Activated CD8-positive, alpha-beta T cell treated with anti-CD3 and anti-CD28 coated beads, Interleukin-2, amount 10 ng/mL, durations not matched to agents 7 days and 5 days (primary cell): ENCODE measurements at regions of chr1 and their contacts with region 1.

Region 1: GRCh38 chr1:205255941-205256780 is 28.4 kb downstream of the TMCC2 start:
- DNase-seq: peak; percentile 88
- ATAC-seq: peak; percentile 94
- H3K4me3 Mint-ChIP-seq: no peak overlapping the region
- H3K27ac Mint-ChIP-seq: no peak overlapping the region
- H3K4me1 Mint-ChIP-seq: peaks cover 5% of the 10 kb centered on the region
- H3K27me3 Mint-ChIP-seq: peaks cover 2% of the 10 kb centered on the region

Region 2: GRCh38 chr1:204941421-204942338 is 314.5 kb before region 1 on chr1:
- CTCF ChIA-PET with region 1: interaction called, 13 read pairs
- POLR2A ChIA-PET with region 1: no interaction called
- DNase-seq: peak; percentile 67
- ATAC-seq: peak; percentile 58
- H3K4me3 Mint-ChIP-seq: no peak overlapping the region
- H3K27ac Mint-ChIP-seq: no peak overlapping the region
- H3K4me1 Mint-ChIP-seq: peaks cover 6% of the 10 kb centered on the region
- H3K27me3 Mint-ChIP-seq: peaks cover 13% of the 10 kb centered on the region

Region 3: DNA sequence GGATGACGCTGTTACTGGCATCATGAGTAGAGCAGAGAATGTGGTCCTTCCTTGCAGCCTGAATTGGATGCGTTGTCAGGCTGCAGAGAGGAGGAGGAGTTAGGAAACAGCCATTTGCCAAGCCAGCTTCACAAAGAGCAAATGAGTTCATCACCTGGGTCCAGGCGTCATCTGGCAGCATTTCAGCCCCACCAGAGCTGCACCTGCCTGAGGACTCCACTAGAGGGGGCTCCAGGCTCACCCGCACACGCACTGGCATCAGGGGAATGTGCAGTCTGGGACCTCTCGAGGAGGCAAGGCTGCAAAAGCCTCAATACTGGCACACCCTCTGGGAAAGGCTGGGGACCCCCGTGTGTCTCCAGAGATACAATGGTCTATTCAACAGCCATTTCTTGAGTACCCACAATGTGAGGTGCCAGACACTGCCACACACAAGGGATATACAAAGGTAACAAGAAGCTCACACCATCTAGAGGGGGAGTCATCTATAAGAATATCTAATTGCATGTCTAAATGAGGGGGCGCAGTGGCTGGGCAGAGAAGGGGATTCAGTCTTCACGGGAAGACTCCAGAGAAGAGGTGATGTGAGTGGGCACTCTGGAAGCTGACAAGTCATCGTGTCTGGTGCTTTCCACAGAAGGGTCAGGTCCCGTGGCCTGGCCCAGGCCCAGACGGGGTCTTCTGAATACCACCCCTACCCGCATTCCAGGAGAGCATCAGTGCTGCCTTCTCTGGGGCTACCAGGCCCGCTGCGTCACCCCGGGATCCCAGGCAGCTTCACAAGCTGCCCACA is 266.7 kb before region 1 on chr1:
- CTCF ChIA-PET with region 1: interaction called, 42 read pairs
- POLR2A ChIA-PET with region 1: interaction called, 3 read pairs
- DNase-seq: peak; percentile 73
- ATAC-seq: peak; percentile 66
- H3K4me3 Mint-ChIP-seq: no peak overlapping the region
- H3K27ac Mint-ChIP-seq: no peak overlapping the region
- H3K4me1 Mint-ChIP-seq: peaks cover 14% of the 10 kb centered on the region
- H3K27me3 Mint-ChIP-seq: peaks cover 9% of the 10 kb centered on the region

Region 4: GRCh38 chr1:205141236-205142101 is 114.7 kb before region 1 on chr1:
- CTCF ChIA-PET with region 1: interaction called, 38 read pairs
- POLR2A ChIA-PET with region 1: no interaction called
- DNase-seq: peak; percentile 86
- ATAC-seq: peak; percentile 92
- H3K4me3 Mint-ChIP-seq: no peak overlapping the region
- H3K27ac Mint-ChIP-seq: no peak overlapping the region
- H3K4me1 Mint-ChIP-seq: peaks cover 7% of the 10 kb centered on the region
- H3K27me3 Mint-ChIP-seq: no peaks in the 10 kb centered on the region

Region 5: GRCh38 chr1:205227584-205228006 is 28.6 kb before region 1 on chr1 and contains the start of gene TMCC2:
- CTCF ChIA-PET with region 1: interaction called, 509 read pairs
- POLR2A ChIA-PET with region 1: interaction called, 7 read pairs
- DNase-seq: peak; percentile 91
- ATAC-seq: peak; percentile 95
- H3K4me3 Mint-ChIP-seq: peak within 1 kb of the TSS; percentile 80
- H3K27ac Mint-ChIP-seq: peak within 1 kb of the TSS; percentile 77
- H3K4me1 Mint-ChIP-seq: peaks cover 45% of the 10 kb centered on the region
- H3K27me3 Mint-ChIP-seq: peaks cover 34% of the 10 kb centered on the region
- total RNA-seq, gene TMCC2: 2.6 to 2.7 TPM

Region 6: GRCh38 chr1:205321164-205321958 is 65.2 kb after region 1 on chr1 and contains the start of gene NUAK2:
- CTCF ChIA-PET with region 1: interaction called, 12 read pairs
- POLR2A ChIA-PET with region 1: no interaction called
- DNase-seq: peak; percentile 69
- ATAC-seq: peak; percentile 79
- H3K4me3 Mint-ChIP-seq: peak within 1 kb of the TSS; percentile 87
- H3K27ac Mint-ChIP-seq: peak within 1 kb of the TSS; percentile 56
- H3K4me1 Mint-ChIP-seq: peaks cover 52% of the 10 kb centered on the region
- H3K27me3 Mint-ChIP-seq: peaks cover 36% of the 10 kb centered on the region
- total RNA-seq, gene NUAK2: 1.6 TPM